ENCODE measurements at regions of chr1 and their contacts with region 1.

Region 1: GRCh38 chr1:160354388-160354985 is 11.3 kb downstream of the NCSTN start:
- DNase-seq: peak; percentile 22
- H3K4me3 Mint-ChIP-seq: no peak overlapping the region
- H3K27ac Mint-ChIP-seq: no peak overlapping the region
- H3K4me1 Mint-ChIP-seq: no peaks in the 10 kb centered on the region
- H3K27me3 Mint-ChIP-seq: no peaks in the 10 kb centered on the region

Region 2: GRCh38 chr1:160332516-160332915 is 22.0 kb before region 1 on chr1:
- CTCF ChIA-PET with region 1: interaction called, 11 read pairs
- intact Hi-C with region 1: no loop called
- DNase-seq: no peak
- H3K4me3 Mint-ChIP-seq: no peak overlapping the region
- H3K27ac Mint-ChIP-seq: no peak overlapping the region
- H3K4me1 Mint-ChIP-seq: no peaks in the 10 kb centered on the region
- H3K27me3 Mint-ChIP-seq: no peaks in the 10 kb centered on the region

Measured in activated naive CD4-positive, alpha-beta T cell treated with anti-CD3 and anti-CD28 coated beads for 36 hours (primary cell).